Common myeloid progenitor, CD34-positive (primary cell): ENCODE measurements at regions of chr15 and their contacts with region 1.

Region 1: GRCh38 chr15:38690689-38691332 is 126.2 kb upstream of the RASGRP1 start:
- DNase-seq: peak; percentile 82 to 91 (median 88)
- H3K4me3 ChIP-seq: no peak overlapping the region
- H3K27ac ChIP-seq: no peak overlapping the region
- H3K4me1 ChIP-seq: peaks cover 5 to 38% (median 19%) of the 10 kb centered on the region in 4 experiments
- H3K27me3 ChIP-seq: no peaks in the 10 kb centered on the region

Region 2: GRCh38 chr15:38440353-38441129 is 250.3 kb before region 1 on chr15:
- CTCF ChIA-PET with region 1: interaction called, 39 read pairs
- POLR2A ChIA-PET with region 1: no interaction called
- DNase-seq: peak; percentile 61 to 83 (median 78)
- H3K4me3 ChIP-seq: no peak overlapping the region
- H3K27ac ChIP-seq: no peak overlapping the region
- H3K4me1 ChIP-seq: peaks cover 0 to 8% (median 3%) of the 10 kb centered on the region in 4 experiments
- H3K27me3 ChIP-seq: no peaks in the 10 kb centered on the region

Region 3: DNA sequence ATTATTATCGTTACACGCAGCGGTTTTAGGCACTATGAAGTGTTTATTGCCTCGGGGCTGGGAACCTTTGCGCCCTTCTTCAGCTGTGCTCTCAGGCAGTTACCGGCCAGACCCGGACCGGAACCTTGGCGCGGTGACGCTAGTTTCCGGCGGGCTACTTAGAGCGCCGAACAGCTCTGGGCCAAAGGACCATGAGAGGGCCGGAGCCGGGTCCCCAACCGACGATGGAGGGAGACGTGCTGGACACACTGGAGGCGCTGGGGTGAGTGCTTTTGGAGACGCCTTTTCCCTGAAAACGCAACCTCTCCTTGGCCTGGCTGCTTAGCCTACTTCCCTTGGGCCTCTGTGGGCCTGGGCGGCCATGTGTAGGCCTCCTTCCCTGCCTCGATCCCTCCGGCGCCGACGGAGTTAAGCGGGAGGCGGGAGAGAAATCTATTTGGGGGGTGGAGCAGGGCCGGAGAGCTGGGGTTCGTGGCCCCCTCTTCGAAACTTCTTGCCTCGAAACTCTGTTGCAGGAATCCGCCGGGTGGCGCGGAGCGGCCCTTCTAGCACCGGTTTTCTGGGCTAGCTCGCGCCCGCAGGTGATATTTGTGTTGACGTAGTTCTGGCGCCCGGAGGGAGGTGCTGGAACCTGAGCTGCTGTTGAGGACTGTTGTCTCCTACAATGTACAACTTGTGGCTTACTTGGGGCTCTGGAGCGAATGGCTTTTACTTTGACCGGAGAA is 236.7 kb before region 1 on chr15 and contains the start of gene FAM98B:
- CTCF ChIA-PET with region 1: interaction called, 12 read pairs
- POLR2A ChIA-PET with region 1: no interaction called
- DNase-seq: peak; percentile 88 to 89 (median 88)
- H3K4me3 ChIP-seq: peak within 1 kb of the TSS; percentile 57 to 97 (median 93)
- H3K27ac ChIP-seq: peak within 1 kb of the TSS; percentile 86 to 95
- H3K4me1 ChIP-seq: peaks cover 7 to 25% (median 15%) of the 10 kb centered on the region in 4 experiments
- H3K27me3 ChIP-seq: no peaks in the 10 kb centered on the region

Region 4: DNA sequence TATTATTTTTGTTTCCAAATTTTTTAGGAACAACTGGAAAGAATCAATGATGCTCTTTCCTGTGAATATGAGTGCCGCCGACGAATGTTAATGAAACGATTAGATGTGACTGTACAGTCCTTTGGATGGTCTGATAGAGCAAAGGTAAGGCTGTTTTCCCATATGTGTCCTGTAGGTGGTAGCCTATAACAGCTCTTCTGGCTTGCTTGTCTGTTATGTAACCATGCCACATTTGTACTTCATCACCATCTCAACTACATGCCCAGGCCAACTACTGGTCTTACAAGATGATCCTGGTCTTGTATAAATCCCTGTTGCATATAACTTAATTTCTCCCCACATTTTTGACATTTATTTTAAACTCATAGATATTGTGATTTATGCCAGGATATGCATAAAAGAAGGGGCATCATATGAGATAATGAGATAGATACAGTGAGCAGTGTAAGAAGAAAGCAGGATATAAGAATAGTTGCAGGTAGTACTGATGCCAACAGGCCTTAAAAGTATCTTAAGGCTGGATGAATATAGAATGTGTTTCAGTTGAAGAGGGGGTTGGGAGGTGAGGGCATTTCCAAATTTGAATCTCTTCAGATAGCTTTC is 216.6 kb before region 1 on chr15:
- CTCF ChIA-PET with region 1: interaction called, 44 read pairs
- POLR2A ChIA-PET with region 1: no interaction called
- DNase-seq: peak; percentile 67 to 83 (median 82)
- H3K4me3 ChIP-seq: no peak overlapping the region
- H3K27ac ChIP-seq: no peak overlapping the region
- H3K4me1 ChIP-seq: no peaks in the 10 kb centered on the region
- H3K27me3 ChIP-seq: no peaks in the 10 kb centered on the region

Region 5: GRCh38 chr15:38638811-38639210 is 52.0 kb before region 1 on chr15:
- CTCF ChIA-PET with region 1: no interaction called
- POLR2A ChIA-PET with region 1: no interaction called
- DNase-seq: peak in 2 of 3 donors; percentile 69 to 82
- H3K4me3 ChIP-seq: no peak overlapping the region
- H3K27ac ChIP-seq: no peak overlapping the region
- H3K4me1 ChIP-seq: peaks cover 9 to 15% (median 13%) of the 10 kb centered on the region in 4 experiments
- H3K27me3 ChIP-seq: no peaks in the 10 kb centered on the region

Region 6: DNA sequence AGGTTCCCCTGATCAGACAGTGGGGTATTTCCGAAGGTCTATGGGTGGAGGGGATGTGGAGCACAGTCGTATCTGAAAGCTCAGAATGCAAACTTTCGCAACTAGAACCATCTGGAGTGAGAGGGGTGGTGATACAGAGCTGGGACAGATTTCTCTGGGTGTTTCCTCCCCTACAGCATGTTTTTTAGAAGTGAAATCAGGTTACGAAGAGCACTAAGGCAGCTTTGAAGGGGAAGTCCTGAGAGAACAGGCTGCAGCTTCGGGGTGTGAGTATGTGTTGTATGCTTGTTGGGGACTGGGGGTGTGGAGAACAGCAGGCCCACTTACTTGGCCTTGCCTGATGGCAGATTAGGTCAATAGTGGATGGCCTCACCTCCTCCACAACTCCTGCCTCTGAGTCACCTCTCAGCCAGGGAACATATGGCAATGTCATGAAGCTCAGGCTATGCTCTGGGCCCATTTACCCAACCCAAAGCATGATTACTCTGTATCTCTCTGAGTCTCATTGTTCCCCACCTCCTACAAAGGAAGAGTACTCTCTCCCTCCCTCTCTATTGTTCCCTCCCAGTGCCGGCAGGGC is 19.0 kb before region 1 on chr15:
- CTCF ChIA-PET with region 1: interaction called, 16 read pairs
- POLR2A ChIA-PET with region 1: interaction called, 3 read pairs
- DNase-seq: peak in 2 of 3 donors; percentile 65 to 71
- H3K4me3 ChIP-seq: no peak overlapping the region
- H3K27ac ChIP-seq: no peak overlapping the region
- H3K4me1 ChIP-seq: peaks cover 17 to 34% (median 26%) of the 10 kb centered on the region in 4 experiments
- H3K27me3 ChIP-seq: peaks cover 0 to 2% (median 0%) of the 10 kb centered on the region in 5 experiments